ENCODE measurements at regions of chr6 and their contacts with region 1.

Region 1: GRCh38 chr6:87078983-87079616 is 15.8 kb downstream of the CGA start:
- DNase-seq: peak; percentile 20
- H3K4me3 ChIP-seq: no peak overlapping the region
- H3K27ac ChIP-seq: no peak overlapping the region
- H3K27me3 ChIP-seq: no peaks in the 10 kb centered on the region
- CTCF ChIP-seq: peak; percentile 93

Region 2: DNA sequence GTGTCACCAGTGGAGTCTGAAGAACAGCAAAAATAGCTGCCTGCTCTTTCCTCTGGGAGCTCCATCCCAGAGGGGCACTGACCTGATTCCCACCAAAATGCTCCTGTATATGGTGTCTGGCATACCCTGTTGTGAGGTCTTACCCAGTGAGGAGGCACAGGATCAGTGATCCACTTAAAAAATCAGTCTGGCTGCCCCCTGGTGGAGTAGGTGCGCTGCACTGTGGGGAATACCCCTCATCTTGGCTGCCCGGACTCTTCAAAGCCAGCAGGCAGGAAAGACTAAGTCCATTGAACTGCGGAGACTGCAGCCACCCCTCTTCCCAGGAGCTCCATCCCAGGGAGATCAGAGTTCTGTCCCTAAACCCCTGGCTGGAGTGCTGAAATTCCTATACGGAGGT is 372.7 kb before region 1 on chr6:
- CTCF ChIA-PET with region 1: no interaction called
- POLR2A ChIA-PET with region 1: no interaction called
- DNase-seq: no peak
- H3K4me3 ChIP-seq: no peak overlapping the region
- H3K27ac ChIP-seq: no peak overlapping the region
- H3K27me3 ChIP-seq: no peaks in the 10 kb centered on the region
- CTCF ChIP-seq: no peak

Region 3: DNA sequence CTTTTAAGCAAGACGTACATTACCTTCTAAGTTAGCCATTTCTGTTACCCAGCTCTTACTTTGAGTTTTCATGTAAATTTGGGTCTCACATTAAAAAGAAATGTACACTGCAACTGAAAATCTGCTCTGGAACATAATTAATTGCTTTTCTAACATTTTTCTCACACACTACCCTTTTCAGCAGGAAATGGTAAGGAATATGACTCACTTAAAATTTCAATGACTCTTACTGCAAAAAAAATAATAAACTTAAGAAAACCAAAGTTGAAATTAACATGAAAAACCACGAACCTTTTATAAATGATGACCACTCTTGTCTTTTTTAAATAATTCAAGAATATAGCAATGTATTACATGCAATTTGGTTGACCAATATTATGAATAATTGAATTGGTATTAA is 14.6 kb after region 1 on chr6:
- CTCF ChIA-PET with region 1: interaction called, 65 read pairs
- POLR2A ChIA-PET with region 1: no interaction called
- DNase-seq: no peak
- H3K4me3 ChIP-seq: no peak overlapping the region
- H3K27ac ChIP-seq: no peak overlapping the region
- H3K27me3 ChIP-seq: no peaks in the 10 kb centered on the region
- CTCF ChIP-seq: no peak

Region 4: DNA sequence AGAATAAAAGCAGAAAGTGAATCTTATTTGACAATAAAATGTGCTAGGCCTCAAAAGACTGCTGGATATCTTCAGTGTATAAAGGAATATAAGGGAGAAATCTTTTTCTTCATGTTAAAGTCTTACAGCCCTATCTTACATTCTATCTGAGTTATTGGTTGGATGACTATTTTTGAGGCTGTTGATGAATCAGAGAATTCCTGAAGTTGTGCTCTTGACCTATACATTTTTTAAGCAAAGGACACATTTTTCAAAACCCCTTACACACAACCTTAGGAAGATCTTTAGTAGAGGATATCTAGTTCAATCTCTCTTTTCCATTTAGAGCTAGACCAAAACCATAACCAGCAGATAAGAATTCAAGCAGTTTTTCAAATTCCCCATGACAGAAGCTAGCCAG is 26.7 kb after region 1 on chr6:
- CTCF ChIA-PET with region 1: interaction called, 14 read pairs
- POLR2A ChIA-PET with region 1: no interaction called
- DNase-seq: no peak
- H3K4me3 ChIP-seq: no peak overlapping the region
- H3K27ac ChIP-seq: no peak overlapping the region
- H3K27me3 ChIP-seq: no peaks in the 10 kb centered on the region
- CTCF ChIP-seq: no peak

Measured in AG04450 (cell line).